ENCODE measurements at regions of chr10 and their contacts with region 1.

Region 1: GRCh38 chr10:19819419-19820033 is 3.3 kb downstream of the PLXDC2 start:
- DNase-seq: peak; percentile 58
- H3K4me3 ChIP-seq: no peak overlapping the region
- H3K27ac ChIP-seq: no peak overlapping the region
- H3K4me1 ChIP-seq: peaks cover 2% of the 10 kb centered on the region
- H3K27me3 ChIP-seq: peaks cover 26 to 42% of the 10 kb centered on the region in 2 experiments
- CTCF ChIP-seq: peak; percentile 44 to 51
- POLR2A ChIP-seq: no peak

Region 2: GRCh38 chr10:19788075-19788686 is 31.3 kb before region 1 on chr10:
- CTCF ChIA-PET with region 1: no interaction called
- POLR2A ChIA-PET with region 1: no interaction called
- dilution Hi-C with region 1: no loop called
- intact Hi-C with region 1: no loop called
- DNase-seq: peak; percentile 40
- H3K4me3 ChIP-seq: no peak overlapping the region
- H3K27ac ChIP-seq: no peak overlapping the region
- H3K4me1 ChIP-seq: no peaks in the 10 kb centered on the region
- H3K27me3 ChIP-seq: no peaks in the 10 kb centered on the region
- CTCF ChIP-seq: peak; percentile 53 to 70
- POLR2A ChIP-seq: no peak

Region 3: DNA sequence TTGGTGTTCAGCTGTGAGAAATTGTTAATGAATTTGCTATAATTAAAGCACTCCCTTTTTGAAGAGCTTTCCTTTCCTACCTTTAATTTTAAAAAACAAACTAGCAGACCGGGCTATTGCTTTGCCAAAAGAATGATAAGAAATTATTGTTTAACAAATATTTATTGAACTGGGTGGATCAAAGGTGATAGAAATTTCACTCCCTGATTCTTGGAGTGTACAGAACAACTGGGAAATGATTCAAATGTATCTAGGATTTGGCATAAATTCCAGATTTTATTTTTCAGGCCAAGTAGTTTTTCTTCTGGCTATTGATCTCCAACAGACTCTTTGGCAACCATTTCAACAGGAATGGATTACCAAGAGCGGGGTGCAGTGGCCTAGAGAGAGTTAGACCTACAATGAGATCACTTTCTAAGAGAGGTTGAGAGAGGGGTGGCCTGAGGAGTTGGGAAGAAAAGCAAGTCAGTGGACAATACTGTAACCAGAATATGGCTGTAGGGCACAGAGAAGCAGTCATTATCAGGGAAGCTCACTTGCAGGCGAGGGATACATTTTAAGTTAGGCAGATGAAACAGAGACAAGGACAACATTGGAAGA is 68.6 kb after region 1 on chr10:
- CTCF ChIA-PET with region 1: no interaction called
- POLR2A ChIA-PET with region 1: no interaction called
- dilution Hi-C with region 1: no loop called
- intact Hi-C with region 1: no loop called
- DNase-seq: no peak
- H3K4me3 ChIP-seq: no peak overlapping the region
- H3K27ac ChIP-seq: no peak overlapping the region
- H3K4me1 ChIP-seq: no peaks in the 10 kb centered on the region
- H3K27me3 ChIP-seq: no peaks in the 10 kb centered on the region
- CTCF ChIP-seq: no peak
- POLR2A ChIP-seq: no peak

Region 4: DNA sequence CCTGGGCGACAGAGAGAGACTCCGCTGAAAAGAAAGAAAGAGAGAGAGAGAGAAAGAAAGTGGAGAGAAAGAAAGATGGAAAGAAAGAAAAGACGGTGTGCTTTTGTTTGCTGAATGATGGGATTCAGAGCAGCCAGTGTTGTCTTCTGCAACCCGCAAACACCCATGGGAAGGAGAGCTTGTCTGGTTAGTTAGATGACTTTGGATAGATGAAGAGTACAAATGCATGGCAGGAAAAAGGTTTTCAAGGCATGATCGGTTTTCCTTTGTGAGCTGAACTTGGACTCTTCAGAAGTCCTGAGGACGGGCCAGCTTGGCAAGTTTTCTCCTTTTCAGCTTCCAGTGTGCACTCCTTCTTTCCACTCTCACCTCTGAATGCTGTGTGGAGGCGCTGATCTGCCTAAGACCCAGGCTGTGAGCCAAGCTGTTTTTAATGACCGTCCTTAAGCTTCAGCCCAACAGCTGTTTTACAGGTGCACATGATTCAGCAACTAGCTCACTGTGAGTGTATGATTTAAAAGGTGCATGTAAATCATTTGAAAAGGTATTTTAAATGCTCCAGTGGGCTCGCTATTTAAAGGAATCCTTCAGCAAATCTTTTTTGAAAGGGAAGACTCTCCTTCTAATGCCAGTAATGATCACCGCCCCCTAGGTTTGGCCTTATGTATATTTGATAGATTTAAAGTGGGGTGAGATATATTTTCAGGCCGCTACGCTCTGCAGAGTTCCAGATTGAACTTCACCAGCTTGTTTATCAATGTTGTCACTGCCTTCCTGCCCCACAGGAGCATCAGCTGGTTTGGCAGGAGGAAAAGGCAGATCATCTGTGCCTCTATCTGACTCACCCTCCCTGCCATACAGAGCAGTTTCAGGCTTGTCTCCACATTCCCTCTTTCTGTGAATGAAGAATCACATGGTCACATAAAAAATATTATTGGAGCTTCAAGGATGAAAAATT is 111.7 kb after region 1 on chr10:
- CTCF ChIA-PET with region 1: no interaction called
- POLR2A ChIA-PET with region 1: no interaction called
- dilution Hi-C with region 1: no loop called
- intact Hi-C with region 1: loop called (anchors 5 kb)
- DNase-seq: peak; percentile 82
- H3K4me3 ChIP-seq: no peak overlapping the region
- H3K27ac ChIP-seq: peak overlapping the region; percentile 9
- H3K4me1 ChIP-seq: peaks cover 27% of the 10 kb centered on the region
- H3K27me3 ChIP-seq: no peaks in the 10 kb centered on the region
- CTCF ChIP-seq: no peak
- POLR2A ChIP-seq: no peak

Region 5: DNA sequence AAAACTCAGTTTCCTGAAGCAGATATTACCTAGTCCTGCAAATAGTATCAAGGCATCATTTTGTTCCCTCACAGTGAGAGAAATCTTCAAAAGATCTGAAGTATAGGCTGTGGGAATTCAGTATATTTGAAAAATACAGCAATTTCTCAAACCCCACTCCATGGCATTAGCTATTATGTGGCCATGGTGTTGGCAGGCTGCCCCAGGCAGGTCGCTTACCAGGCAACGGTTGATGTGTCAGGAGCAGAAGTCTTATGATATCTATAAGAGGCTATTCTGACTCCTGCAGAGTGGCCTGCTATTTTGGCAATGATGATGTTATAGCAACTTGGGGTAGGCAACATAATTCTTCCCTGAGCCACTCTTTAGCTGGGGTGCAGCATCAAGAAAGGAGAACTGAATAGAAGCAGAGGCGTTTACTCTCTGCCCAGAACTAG is 184.6 kb after region 1 on chr10:
- CTCF ChIA-PET with region 1: no interaction called
- POLR2A ChIA-PET with region 1: no interaction called
- dilution Hi-C with region 1: no loop called
- intact Hi-C with region 1: loop called (anchors 5 kb)
- DNase-seq: no peak
- H3K4me3 ChIP-seq: no peak overlapping the region
- H3K27ac ChIP-seq: no peak overlapping the region
- H3K4me1 ChIP-seq: no peaks in the 10 kb centered on the region
- H3K27me3 ChIP-seq: no peaks in the 10 kb centered on the region
- CTCF ChIP-seq: no peak
- POLR2A ChIP-seq: no peak

Region 6: GRCh38 chr10:20100171-20100570 is 280.6 kb after region 1 on chr10:
- CTCF ChIA-PET with region 1: no interaction called
- POLR2A ChIA-PET with region 1: no interaction called
- dilution Hi-C with region 1: no loop called
- intact Hi-C with region 1: loop called (anchors 5 kb)
- DNase-seq: peak; percentile 18
- H3K4me3 ChIP-seq: no peak overlapping the region
- H3K27ac ChIP-seq: no peak overlapping the region
- H3K4me1 ChIP-seq: no peaks in the 10 kb centered on the region
- H3K27me3 ChIP-seq: no peaks in the 10 kb centered on the region
- CTCF ChIP-seq: no peak
- POLR2A ChIP-seq: no peak